Sciatic nerve (tissue), 2 donors: ENCODE measurements at regions of chr3 and their contacts with region 1.

Region 1: GRCh38 chr3:47420511-47421484 is 40.0 kb downstream of the PTPN23 start:
- DNase-seq: peak; percentile 93
- ATAC-seq: peak; percentile 90

Region 2: GRCh38 chr3:47475570-47476329 is 55.0 kb after region 1 on chr3 and contains the start of gene SCAP:
- intact Hi-C with region 1: loop called (anchors 10 kb)
- DNase-seq: peak; percentile 97
- ATAC-seq: peak; percentile 99
- total RNA-seq, gene SCAP: 64.6 TPM